Motor neuron (in vitro differentiated cells): ENCODE measurements at regions of chr22 and their contacts with region 1.

Region 1: DNA sequence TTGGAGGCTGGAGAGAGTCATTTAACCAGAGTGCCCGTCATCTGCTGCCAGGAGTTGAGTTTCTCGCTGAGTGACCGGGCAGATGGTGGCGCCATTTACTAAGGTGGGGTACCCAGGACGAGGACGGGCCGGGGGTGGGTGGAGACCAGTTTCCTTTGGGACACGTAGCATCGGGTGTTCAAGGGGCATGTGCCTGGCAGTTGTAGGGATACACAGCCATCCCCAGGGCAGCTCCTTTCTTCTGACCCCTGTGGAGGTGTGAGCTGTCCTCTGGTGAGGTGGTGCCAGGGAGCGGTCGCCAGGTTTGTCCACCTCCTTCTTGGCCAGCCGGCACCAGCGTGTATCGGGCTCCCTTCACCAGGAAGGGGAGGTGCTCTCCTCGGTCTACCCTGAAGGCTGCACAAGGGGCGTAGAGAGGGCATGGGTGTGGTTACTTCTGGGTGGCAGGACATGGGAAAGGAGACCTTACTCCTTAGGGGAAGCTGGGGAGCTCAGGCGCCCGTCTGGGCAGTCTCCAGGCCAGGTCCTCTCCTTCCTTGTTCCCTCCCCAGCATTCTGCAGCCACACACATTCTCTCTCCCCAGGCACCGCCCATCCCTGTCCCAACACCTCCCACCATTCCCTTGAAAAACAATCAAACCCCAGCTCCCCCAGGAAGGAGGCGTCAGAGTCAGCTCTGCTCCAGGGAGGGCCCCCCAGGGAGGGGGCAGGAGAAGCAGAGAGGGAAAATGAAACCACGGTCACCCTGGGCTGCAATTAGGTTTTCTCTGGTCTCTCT is 10.3 kb upstream of the MB start:
- ATAC-seq: peak; percentile 73 to 83 (median 77)
- H3K4me3 ChIP-seq: peak overlapping the region in 2 of 5 donors; percentile 6 to 14
- H3K27ac ChIP-seq: no peak overlapping the region
- H3K4me1 ChIP-seq: peaks cover 0 to 15% of the 10 kb centered on the region in 2 donors

Region 2: GRCh38 chr22:35921777-35922176 is 294.3 kb after region 1 on chr22:
- in situ Hi-C with region 1: loop called in 1 of 9 experiments (anchors 25 kb)
- ATAC-seq: peak; percentile 87 to 98 (median 94)
- H3K4me3 ChIP-seq: no peak overlapping the region
- H3K27ac ChIP-seq: no peak overlapping the region
- H3K4me1 ChIP-seq: peaks cover 0 to 3% of the 10 kb centered on the region in 2 donors

Region 3: GRCh38 chr22:36081023-36081431 is 453.6 kb after region 1 on chr22:
- in situ Hi-C with region 1: no loop called
- ATAC-seq: peak in 7 of 8 experiments; percentile 93 to 98 (median 95)
- H3K4me3 ChIP-seq: no peak overlapping the region
- H3K27ac ChIP-seq: no peak overlapping the region
- H3K4me1 ChIP-seq: no peaks in the 10 kb centered on the region